Common myeloid progenitor, CD34-positive (primary cell): ENCODE measurements at regions of chr21 and their contacts with region 1.

Region 1: GRCh38 chr21:25607151-25608043 is at the start of gene MRPL39:
- DNase-seq: peak; percentile 92 to 95 (median 94)
- H3K4me3 ChIP-seq: peak within 1 kb of the TSS; percentile 89 to 97 (median 93)
- H3K27ac ChIP-seq: peak within 1 kb of the TSS; percentile 53 to 86
- H3K4me1 ChIP-seq: peaks cover 9 to 21% (median 18%) of the 10 kb centered on the region in 4 experiments
- H3K27me3 ChIP-seq: no peaks in the 10 kb centered on the region

Region 2: DNA sequence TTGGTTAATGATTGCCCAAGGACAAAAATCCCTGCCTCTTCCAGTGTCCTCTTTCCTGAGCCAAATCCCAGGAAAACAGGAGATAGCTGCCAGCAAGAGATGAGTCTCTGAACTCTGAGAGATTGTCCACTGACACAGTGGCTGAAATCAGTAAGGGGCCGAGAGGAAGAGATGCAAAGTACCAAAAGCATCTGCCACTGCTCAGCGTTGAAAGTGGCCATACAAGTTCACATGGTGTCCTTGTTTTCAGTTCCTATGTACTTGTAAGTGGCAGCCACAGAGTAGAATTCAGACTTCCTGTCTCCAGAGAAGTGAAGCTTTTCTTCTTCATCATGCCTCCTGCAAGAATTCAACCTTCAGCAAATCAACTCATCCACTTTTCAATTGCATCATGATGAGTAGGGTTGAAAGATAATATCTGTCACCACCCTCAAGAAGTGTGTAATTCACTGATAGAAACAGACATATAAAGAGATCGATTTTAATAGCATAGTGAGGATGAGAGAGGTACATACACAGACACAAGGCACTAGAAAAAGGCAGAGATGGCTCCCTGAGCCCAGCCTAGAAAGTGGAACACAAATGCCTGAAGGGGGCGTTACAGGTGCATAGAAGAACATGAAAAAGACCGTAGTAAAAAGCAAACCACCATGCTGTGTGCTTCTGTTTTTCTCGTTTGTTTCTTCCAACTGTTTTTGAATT is 185.9 kb before region 1 on chr21:
- CTCF ChIA-PET with region 1: interaction called, 10 read pairs
- POLR2A ChIA-PET with region 1: no interaction called
- DNase-seq: peak; percentile 70 to 86 (median 86)
- H3K4me3 ChIP-seq: peak overlapping the region in 1 of 7 experiments; percentile 24
- H3K27ac ChIP-seq: no peak overlapping the region
- H3K4me1 ChIP-seq: peaks cover 5 to 21% (median 9%) of the 10 kb centered on the region in 4 experiments
- H3K27me3 ChIP-seq: no peaks in the 10 kb centered on the region

Region 3: DNA sequence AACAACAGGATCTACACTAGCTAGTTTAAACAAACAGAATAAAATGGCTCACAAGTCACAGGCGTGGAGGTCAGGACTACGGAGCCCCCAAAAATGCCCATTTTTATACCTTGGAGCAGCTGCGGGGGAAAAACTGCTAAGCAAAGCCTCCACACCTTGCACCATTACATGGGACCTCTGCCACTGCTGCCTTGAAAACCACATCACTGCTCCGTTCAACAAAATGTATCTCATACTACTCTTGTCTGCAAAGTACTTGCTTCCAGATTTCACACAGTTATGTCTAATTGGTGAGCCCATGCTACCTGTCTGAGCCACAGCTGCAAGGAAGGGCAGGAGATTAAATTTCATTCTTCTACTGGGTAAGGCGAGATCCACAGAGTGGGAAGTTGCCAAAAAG is 24.5 kb before region 1 on chr21:
- CTCF ChIA-PET with region 1: interaction called, 11 read pairs
- POLR2A ChIA-PET with region 1: no interaction called
- DNase-seq: no peak
- H3K4me3 ChIP-seq: no peak overlapping the region
- H3K27ac ChIP-seq: no peak overlapping the region
- H3K4me1 ChIP-seq: peaks cover 0 to 2% (median 0%) of the 10 kb centered on the region in 4 experiments
- H3K27me3 ChIP-seq: no peaks in the 10 kb centered on the region

Region 4: DNA sequence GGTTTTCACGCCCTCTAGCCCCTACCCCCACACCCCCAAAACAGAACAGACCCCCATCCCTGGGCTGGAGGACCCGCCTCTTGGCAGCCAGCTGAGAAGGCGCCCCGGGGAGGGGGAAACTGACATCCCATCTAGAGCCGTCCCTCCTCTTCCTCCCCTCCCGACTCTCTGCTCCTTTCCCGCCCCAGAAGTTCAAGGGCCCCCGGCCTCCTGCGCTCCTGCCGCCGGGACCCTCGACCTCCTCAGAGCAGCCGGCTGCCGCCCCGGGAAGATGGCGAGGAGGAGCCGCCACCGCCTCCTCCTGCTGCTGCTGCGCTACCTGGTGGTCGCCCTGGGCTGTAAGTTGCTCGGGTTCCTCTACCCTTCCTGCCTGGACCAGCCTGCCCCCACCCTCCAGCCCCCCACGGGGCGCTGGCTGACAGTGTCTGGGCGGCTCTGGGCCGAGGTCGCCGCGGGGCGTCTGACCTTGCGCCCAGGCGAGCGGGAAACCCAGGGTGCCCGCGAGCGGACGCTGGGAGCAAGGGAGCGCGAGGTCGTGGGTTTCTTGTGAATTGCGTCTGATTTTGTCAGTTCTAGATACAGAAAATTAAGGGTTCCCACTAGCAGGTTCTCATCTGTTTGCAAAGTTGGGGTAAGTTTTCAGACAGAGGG is 32.3 kb after region 1 on chr21:
- CTCF ChIA-PET with region 1: interaction called, 40 read pairs
- POLR2A ChIA-PET with region 1: no interaction called
- DNase-seq: peak; percentile 73 to 85 (median 73)
- H3K4me3 ChIP-seq: peak overlapping the region; percentile 67 to 93 (median 84)
- H3K27ac ChIP-seq: no peak overlapping the region
- H3K4me1 ChIP-seq: peaks cover 6 to 13% (median 9%) of the 10 kb centered on the region in 4 experiments
- H3K27me3 ChIP-seq: peaks cover 0 to 4% (median 0%) of the 10 kb centered on the region in 5 experiments

Region 5: GRCh38 chr21:25708467-25709065 is 101.2 kb after region 1 on chr21:
- CTCF ChIA-PET with region 1: interaction called, 38 read pairs
- POLR2A ChIA-PET with region 1: no interaction called
- DNase-seq: peak; percentile 61 to 80 (median 76)
- H3K4me3 ChIP-seq: no peak overlapping the region
- H3K27ac ChIP-seq: no peak overlapping the region
- H3K4me1 ChIP-seq: no peaks in the 10 kb centered on the region
- H3K27me3 ChIP-seq: no peaks in the 10 kb centered on the region

Region 6: DNA sequence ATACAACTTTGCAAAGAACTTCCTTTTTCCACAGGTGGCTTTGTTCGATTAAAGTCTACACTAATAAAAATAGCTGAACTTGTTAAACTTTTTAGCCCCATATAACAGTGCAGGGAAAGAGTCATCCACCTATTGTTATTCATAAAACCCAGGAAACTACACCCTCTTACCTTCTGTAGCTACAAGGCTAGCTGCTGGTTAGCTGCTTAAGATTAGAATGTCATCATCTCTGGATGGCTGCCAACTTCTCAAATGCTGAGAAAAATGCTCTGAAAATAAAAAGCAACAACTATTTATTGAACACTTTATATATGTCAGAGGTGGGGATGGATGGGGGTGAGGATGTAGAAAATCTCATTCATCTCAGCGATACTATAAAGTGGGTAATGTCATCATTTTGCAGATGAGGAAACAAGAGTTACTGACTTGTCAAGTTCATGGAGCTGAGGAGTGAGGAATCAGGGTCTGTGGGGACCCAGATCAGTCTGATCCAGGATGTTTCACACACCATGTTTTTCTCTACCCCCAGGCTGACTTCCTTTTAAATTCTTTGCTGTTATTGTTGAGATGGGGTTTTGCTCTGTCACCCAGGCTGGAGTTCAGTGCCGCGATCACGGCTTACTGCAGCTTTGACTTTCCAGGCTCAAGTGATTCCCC is 110.2 kb after region 1 on chr21:
- CTCF ChIA-PET with region 1: interaction called, 22 read pairs
- POLR2A ChIA-PET with region 1: no interaction called
- DNase-seq: peak; percentile 48 to 81 (median 79)
- H3K4me3 ChIP-seq: no peak overlapping the region
- H3K27ac ChIP-seq: peak overlapping the region in 1 of 2 experiments; percentile 58
- H3K4me1 ChIP-seq: peaks cover 0 to 20% (median 10%) of the 10 kb centered on the region in 4 experiments
- H3K27me3 ChIP-seq: no peaks in the 10 kb centered on the region

Region 7: DNA sequence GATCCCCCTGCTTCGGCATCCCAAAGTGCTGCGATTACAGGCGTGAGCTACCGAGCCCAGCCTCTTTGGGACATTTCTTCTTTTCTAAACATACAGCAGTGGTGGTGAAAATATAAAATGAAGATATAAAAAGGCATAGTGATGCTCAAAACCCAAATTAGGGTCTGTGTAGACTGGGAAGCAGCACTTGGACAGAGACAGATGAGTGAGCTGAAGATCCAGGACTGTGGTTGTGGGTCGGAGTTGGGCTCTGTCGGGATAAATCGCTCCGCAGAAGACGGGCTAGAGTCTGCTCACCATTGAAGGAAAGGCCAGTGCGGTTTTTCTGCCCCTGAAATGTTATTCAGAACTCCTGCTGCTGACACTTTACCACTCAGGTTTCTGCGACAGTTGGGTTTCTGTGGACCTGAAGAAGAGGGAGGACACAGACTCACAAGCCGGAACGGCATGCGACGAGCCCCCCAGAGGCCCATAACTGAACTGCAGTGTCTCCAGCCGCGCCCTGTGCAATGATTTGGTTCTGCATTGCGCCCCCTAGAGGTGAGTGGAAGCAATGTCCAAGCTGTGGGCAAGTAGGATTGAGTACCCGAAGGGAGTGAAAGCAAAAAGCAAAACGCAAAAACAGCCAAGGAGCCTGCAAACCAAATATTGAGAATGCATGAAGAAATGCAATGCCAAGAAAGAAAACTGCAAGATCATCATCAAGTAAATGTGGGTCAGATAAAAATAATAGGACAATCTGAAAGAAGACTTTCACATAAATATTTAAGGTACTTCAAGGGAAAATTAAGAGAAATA is 194.0 kb after region 1 on chr21:
- CTCF ChIA-PET with region 1: interaction called, 12 read pairs
- POLR2A ChIA-PET with region 1: no interaction called
- DNase-seq: peak; percentile 91 to 97 (median 95)
- H3K4me3 ChIP-seq: peak overlapping the region in 4 of 7 experiments; percentile 20 to 51 (median 28)
- H3K27ac ChIP-seq: no peak overlapping the region
- H3K4me1 ChIP-seq: peaks cover 0 to 4% (median 0%) of the 10 kb centered on the region in 4 experiments
- H3K27me3 ChIP-seq: no peaks in the 10 kb centered on the region